ENCODE measurements at regions of chr1 and their contacts with region 1.

Region 1: DNA sequence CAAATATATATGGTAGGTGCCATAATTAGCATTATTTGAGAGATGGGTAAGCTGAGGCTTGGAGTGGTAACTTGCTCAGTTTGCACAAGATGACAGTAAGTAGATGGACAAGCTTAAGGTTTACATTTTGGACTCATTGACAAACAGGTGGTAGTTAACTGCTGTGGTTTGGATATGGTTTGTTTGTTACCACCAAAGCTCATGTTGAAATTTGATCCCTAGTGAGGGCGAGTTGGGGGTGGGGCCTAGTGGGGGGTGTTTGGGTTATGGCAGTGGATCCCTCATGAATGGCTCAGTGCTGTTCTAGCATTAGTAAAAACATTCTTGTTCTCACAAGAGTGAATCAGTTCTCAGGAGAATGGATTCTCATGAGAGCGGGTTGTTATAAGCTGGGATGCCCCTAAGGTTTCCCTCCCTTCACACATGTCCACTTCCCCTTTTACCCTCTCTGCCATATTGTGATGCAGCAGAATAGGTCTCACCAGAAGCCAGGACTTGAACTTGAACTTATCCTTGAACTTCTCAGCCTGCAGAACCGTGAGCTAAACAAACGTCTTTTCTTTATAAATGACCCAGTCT is 6.6 kb upstream of the PRRX1 start:
- DNase-seq: peak; percentile 42
- ATAC-seq: peak; percentile 78
- H3K4me3 ChIP-seq: no peak overlapping the region
- H3K27ac ChIP-seq: no peak overlapping the region
- H3K4me1 ChIP-seq: no peaks in the 10 kb centered on the region
- H3K27me3 ChIP-seq: peaks cover 2 to 16% of the 10 kb centered on the region in 2 experiments
- CTCF ChIP-seq: no peak
- EP300 ChIP-seq: 0 out of 4 replicates have a peak, but pooled peaks of 1 of the 2 experiments have one; percentile 34
- POLR2A ChIP-seq: no peak
- RAD21 ChIP-seq: no peak

Region 2: GRCh38 chr1:170495006-170495405 is 162.4 kb before region 1 on chr1:
- CTCF ChIA-PET with region 1: no interaction called
- POLR2A ChIA-PET with region 1: no interaction called
- RAD21 ChIA-PET with region 1: no interaction called
- SMC1A ChIA-PET with region 1: no interaction called
- in situ Hi-C with region 1: no loop called
- intact Hi-C with region 1: no loop called
- DNase-seq: no peak
- ATAC-seq: no peak
- H3K4me3 ChIP-seq: no peak overlapping the region
- H3K27ac ChIP-seq: no peak overlapping the region
- H3K4me1 ChIP-seq: no peaks in the 10 kb centered on the region
- H3K27me3 ChIP-seq: no peaks in the 10 kb centered on the region; a peak in 1 of 4 replicates
- CTCF ChIP-seq: no peak
- EP300 ChIP-seq: no peak
- POLR2A ChIP-seq: no peak
- RAD21 ChIP-seq: no peak

Region 3: GRCh38 chr1:170531758-170532657 is 125.4 kb before region 1 on chr1 and contains the start of gene GORAB:
- CTCF ChIA-PET with region 1: interaction called, 4 read pairs
- POLR2A ChIA-PET with region 1: interaction called, 10 read pairs
- RAD21 ChIA-PET with region 1: interaction called, 41 read pairs
- SMC1A ChIA-PET with region 1: interaction called, 112 read pairs
- in situ Hi-C with region 1: no loop called
- intact Hi-C with region 1: no loop called
- DNase-seq: peak; percentile 82
- ATAC-seq: peak; percentile 94
- H3K4me3 ChIP-seq: peak within 1 kb of the TSS; percentile 85
- H3K27ac ChIP-seq: peak within 1 kb of the TSS; percentile 99
- H3K4me1 ChIP-seq: no peaks in the 10 kb centered on the region
- H3K27me3 ChIP-seq: no peaks in the 10 kb centered on the region
- CTCF ChIP-seq: no peak
- EP300 ChIP-seq: no peak
- POLR2A ChIP-seq: peak; percentile 93
- RAD21 ChIP-seq: no peak
- polyA plus RNA-seq, gene GORAB: 5.5 to 7.6 TPM

Region 4: DNA sequence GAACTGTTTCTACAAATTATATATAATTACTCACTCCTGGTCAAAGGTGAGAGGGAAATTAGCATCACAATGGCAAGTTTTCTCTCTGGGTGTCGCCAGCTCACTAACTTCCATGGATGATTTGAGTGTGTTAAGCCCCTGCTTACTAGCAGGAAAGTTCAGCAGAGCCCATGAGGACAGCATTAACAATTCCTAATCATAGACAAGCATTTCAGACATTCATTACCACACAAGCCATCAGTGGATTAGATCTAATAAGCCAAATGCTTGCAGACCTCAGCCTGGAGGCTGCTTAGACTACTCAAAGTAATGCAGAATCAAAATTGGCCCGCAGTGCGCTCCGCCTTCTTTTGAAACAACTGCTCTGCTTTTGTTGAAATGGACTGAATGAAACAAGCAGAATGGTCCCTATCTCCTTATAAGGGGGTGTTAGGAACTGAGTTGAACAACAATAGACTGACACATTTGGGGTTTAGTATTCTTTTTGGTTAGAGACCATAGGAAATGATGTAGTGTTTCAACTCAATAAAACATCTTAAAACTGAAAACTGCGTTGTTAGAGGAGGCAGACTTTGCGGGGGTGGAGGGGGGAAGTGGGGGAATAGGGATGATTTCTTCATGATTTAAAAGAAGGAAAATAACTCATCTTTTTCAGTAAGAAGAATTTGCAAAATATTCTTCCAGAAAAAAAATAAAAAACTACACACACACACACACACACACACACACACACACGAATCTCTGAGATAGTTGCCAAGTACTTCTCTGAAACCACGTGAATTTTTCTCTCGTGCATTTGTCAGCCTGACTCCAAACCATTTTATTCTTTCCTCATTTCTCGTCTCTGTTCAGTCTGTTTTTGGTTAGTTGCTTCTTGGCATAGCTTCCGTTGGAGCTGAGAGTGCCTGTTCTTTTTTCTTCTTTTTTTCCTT is 70.8 kb before region 1 on chr1:
- CTCF ChIA-PET with region 1: interaction called, 7 read pairs
- POLR2A ChIA-PET with region 1: interaction called, 9 read pairs
- RAD21 ChIA-PET with region 1: interaction called, 46 read pairs
- SMC1A ChIA-PET with region 1: interaction called, 35 read pairs
- in situ Hi-C with region 1: no loop called
- intact Hi-C with region 1: loop called (anchors 10 kb)
- DNase-seq: no peak
- ATAC-seq: peak; percentile 74
- H3K4me3 ChIP-seq: no peak overlapping the region
- H3K27ac ChIP-seq: no peak overlapping the region
- H3K4me1 ChIP-seq: no peaks in the 10 kb centered on the region
- H3K27me3 ChIP-seq: no peaks in the 10 kb centered on the region
- CTCF ChIP-seq: no peak
- EP300 ChIP-seq: no peak
- POLR2A ChIP-seq: no peak
- RAD21 ChIP-seq: no peak

Region 5: GRCh38 chr1:170619241-170620028 is 37.9 kb before region 1 on chr1:
- CTCF ChIA-PET with region 1: interaction called, 5 read pairs
- POLR2A ChIA-PET with region 1: interaction called, 27 read pairs
- RAD21 ChIA-PET with region 1: interaction called, 31 read pairs
- SMC1A ChIA-PET with region 1: interaction called, 150 read pairs
- in situ Hi-C with region 1: no loop called
- intact Hi-C with region 1: no loop called
- DNase-seq: no peak
- ATAC-seq: no peak
- H3K4me3 ChIP-seq: no peak overlapping the region
- H3K27ac ChIP-seq: no peak overlapping the region
- H3K4me1 ChIP-seq: no peaks in the 10 kb centered on the region
- H3K27me3 ChIP-seq: no peaks in the 10 kb centered on the region; a peak in 1 of 4 replicates
- CTCF ChIP-seq: no peak
- EP300 ChIP-seq: no peak
- POLR2A ChIP-seq: no peak
- RAD21 ChIP-seq: no peak

Region 6: DNA sequence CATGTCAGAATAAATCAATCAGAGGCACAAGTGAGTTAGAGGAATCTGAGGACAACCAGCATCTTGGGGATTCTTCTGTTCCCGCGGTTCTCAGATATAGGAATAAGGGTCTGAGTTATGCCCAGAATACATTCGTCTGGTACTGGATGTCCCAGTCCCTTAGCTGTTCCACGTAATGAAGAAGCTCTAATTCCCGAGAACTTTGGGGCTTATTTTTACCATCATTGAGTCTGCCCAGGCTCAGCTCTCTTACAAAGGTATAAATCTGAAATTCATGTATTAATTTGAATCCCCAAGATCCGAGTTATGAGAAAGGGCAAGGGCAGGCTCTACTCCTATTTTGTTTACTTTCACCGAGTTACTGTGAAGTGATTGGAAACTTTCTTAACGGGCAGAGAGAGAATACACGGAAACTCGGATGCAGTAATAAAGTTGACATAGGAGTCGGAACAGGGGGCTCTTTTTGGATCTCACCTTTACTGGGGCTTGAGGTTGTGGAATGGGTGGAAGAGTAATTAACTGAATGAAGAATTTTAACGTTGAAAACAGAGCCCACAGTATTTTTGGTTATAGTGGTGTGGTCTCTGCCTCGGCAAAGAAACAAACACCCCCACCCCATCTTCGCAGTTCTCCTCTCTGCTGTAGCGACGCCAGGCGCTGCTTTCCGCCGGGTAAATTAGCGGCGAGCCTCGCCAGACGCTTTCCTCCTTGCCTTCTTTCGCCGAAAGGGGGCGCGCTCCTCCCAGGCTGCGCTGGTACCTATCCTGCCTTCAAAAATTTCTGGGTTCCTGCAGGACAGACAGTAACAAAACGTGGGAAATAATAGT is 13.7 kb after region 1 on chr1:
- CTCF ChIA-PET with region 1: interaction called, 7 read pairs
- POLR2A ChIA-PET with region 1: interaction called, 15 read pairs
- RAD21 ChIA-PET with region 1: interaction called, 20 read pairs
- SMC1A ChIA-PET with region 1: interaction called, 49 read pairs
- in situ Hi-C with region 1: no loop called
- intact Hi-C with region 1: no loop called
- DNase-seq: no peak
- ATAC-seq: peak; percentile 74
- H3K4me3 ChIP-seq: no peak overlapping the region
- H3K27ac ChIP-seq: no peak overlapping the region
- H3K4me1 ChIP-seq: no peaks in the 10 kb centered on the region
- H3K27me3 ChIP-seq: peaks cover 3 to 13% of the 10 kb centered on the region in 2 experiments; a peak in 3 of 4 replicates
- CTCF ChIP-seq: peak; percentile 54 to 65 (median 55)
- EP300 ChIP-seq: no peak
- POLR2A ChIP-seq: no peak
- RAD21 ChIP-seq: peak; percentile 51

Measured in GM12878 (cell line).